HCT116 (cell line): ENCODE measurements at regions of chr16 and their contacts with region 1.

Region 1: GRCh38 chr16:86252596-86252995 is 257.7 kb upstream of the FOXF1 start:
- DNase-seq: peak; percentile 42
- ATAC-seq: peak; percentile 97
- H3K4me3 ChIP-seq: no peak overlapping the region
- H3K27ac ChIP-seq: no peak overlapping the region
- H3K4me1 ChIP-seq: no peaks in the 10 kb centered on the region
- H3K27me3 ChIP-seq: peaks cover 24% of the 10 kb centered on the region
- CTCF ChIP-seq: peak; percentile 82 to 90 (median 86)
- POLR2A ChIP-seq: no peak
- RAD21 ChIP-seq: peak; percentile 87

Region 2: DNA sequence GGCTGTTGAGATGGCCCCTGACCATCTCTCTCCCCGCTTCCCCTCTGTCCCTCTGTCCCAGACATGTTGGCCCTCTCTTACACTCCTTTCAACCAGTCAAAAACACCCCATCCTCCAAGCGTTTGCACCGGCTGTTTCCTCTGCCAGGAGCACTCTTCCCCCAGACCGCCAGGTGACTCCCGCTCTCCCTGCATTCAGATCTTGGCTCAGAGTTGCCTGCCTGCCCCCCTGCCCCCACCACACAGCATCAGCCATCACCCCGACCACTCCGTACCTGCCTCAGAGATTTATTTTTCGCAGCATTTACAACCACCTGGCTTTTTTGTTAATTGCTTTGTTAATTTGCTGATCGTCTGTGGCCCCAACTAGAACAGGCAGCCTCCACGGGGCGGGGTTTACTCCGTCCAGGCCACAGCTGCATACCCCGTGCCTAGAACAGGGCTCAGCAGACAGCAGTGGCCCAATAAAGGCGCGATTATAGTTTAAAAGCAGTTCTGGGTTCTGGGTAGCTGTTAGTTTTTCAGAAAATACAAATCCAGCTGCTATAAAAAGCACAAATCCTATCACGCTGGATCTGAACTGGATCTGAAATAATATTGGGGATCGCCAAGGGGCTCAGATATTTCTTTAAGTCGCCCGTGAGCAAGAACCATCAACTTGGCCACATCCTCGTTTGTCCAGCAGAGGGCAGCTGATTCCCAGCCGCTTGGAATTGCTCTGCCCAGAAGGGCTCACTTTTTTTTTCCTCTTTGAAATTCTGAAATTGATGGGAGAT is 180.1 kb before region 1 on chr16:
- CTCF ChIA-PET with region 1: interaction called, 24 read pairs
- POLR2A ChIA-PET with region 1: no interaction called
- RAD21 ChIA-PET with region 1: interaction called in 1 of 2 experiments, 4 read pairs
- intact Hi-C with region 1: loop called (anchors 2 kb)
- DNase-seq: peak; percentile 68
- ATAC-seq: peak; percentile 87
- H3K4me3 ChIP-seq: no peak overlapping the region; a peak in 1 of 4 replicates
- H3K27ac ChIP-seq: no peak overlapping the region
- H3K4me1 ChIP-seq: peaks cover 0 to 4% of the 10 kb centered on the region in 2 experiments; a peak in 1 of 4 replicates
- H3K27me3 ChIP-seq: no peaks in the 10 kb centered on the region
- CTCF ChIP-seq: peak; percentile 81 to 96 (median 88)
- POLR2A ChIP-seq: no peak
- RAD21 ChIP-seq: peak; percentile 92

Region 3: DNA sequence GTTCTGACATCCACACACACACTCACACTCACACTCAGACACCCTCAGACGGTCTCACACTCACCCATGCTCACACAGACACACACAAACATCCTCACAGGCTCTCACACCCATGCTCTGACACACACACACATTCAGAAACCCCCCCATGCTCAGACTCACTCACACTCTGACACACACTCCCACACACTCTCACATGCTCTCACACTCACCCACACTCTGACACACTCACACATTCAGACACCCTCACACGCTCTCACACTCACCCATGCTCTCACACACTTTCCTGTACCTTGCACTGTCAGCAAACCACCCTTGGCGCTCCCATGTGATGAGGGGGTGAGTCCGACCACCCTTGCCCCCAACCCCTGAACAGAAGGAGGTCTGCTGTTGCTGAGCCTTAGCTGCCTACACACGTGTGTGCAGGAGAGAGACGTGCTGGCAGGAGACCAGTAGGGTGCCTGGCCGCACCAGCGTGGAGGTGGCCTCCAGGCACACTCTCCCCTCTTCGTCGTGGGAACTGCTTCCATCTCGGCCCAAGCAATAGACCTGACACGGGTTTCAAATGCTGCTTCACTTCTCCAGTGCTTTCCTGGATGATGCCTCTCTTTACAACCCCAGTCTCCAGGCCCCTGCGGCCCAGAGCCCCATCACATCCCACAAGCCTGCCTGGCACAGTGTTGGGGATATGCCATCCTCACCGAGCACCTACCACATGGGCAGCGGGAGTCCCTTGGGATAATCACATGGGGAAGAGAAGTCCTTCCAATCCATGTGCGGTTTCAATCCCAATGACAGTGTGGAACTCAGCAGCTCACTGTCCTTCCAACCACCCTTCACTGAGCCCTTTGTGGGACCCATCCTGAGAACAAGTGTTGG is 10.1 kb before region 1 on chr16:
- CTCF ChIA-PET with region 1: interaction called, 33 read pairs
- POLR2A ChIA-PET with region 1: no interaction called
- RAD21 ChIA-PET with region 1: no interaction called
- intact Hi-C with region 1: no loop called
- DNase-seq: no peak
- ATAC-seq: no peak
- H3K4me3 ChIP-seq: no peak overlapping the region
- H3K27ac ChIP-seq: no peak overlapping the region
- H3K4me1 ChIP-seq: no peaks in the 10 kb centered on the region
- H3K27me3 ChIP-seq: peaks cover 57% of the 10 kb centered on the region
- CTCF ChIP-seq: no peak
- POLR2A ChIP-seq: no peak
- RAD21 ChIP-seq: no peak

Region 4: GRCh38 chr16:86272744-86273143 is 20.1 kb after region 1 on chr16:
- CTCF ChIA-PET with region 1: interaction called, 20 read pairs
- POLR2A ChIA-PET with region 1: no interaction called
- RAD21 ChIA-PET with region 1: no interaction called
- intact Hi-C with region 1: no loop called
- DNase-seq: no peak
- ATAC-seq: no peak
- H3K4me3 ChIP-seq: no peak overlapping the region
- H3K27ac ChIP-seq: no peak overlapping the region
- H3K4me1 ChIP-seq: no peaks in the 10 kb centered on the region
- H3K27me3 ChIP-seq: peaks cover 64% of the 10 kb centered on the region
- CTCF ChIP-seq: no peak
- POLR2A ChIP-seq: no peak
- RAD21 ChIP-seq: no peak

Region 5: GRCh38 chr16:86718118-86718517 is 465.5 kb after region 1 on chr16:
- CTCF ChIA-PET with region 1: no interaction called
- POLR2A ChIA-PET with region 1: no interaction called
- RAD21 ChIA-PET with region 1: no interaction called
- intact Hi-C with region 1: no loop called
- DNase-seq: no peak
- ATAC-seq: no peak
- H3K4me3 ChIP-seq: no peak overlapping the region
- H3K27ac ChIP-seq: no peak overlapping the region
- H3K4me1 ChIP-seq: no peaks in the 10 kb centered on the region; a peak in 1 of 4 replicates
- H3K27me3 ChIP-seq: peaks cover 21% of the 10 kb centered on the region; the same call in 1 of the 2 replicates
- CTCF ChIP-seq: no peak
- POLR2A ChIP-seq: no peak
- RAD21 ChIP-seq: no peak